Activated T-helper 1 cell treated with anti-CD3 and anti-CD28 coated beads, Interleukin-12 subunit alpha, Interleukin-12 subunit beta, Interleukin-2, Interleukin-4 antibody, amounts not matched to agents 30 ng/mL and 10 ng/mL and 1 ng/mL, durations not matched to agents 14 hours and 24 hours and 36 hours (primary cell): ENCODE measurements at regions of chr7 and their contacts with region 1.

Region 1: GRCh38 chr7:135509903-135510602 is at the start of gene CNOT4:
- DNase-seq: peak; percentile 92
- H3K4me3 Mint-ChIP-seq: no peak within 1 kb of the TSS
- H3K27ac Mint-ChIP-seq: no peak within 1 kb of the TSS
- H3K4me1 Mint-ChIP-seq: no peaks in the 10 kb centered on the region
- H3K27me3 Mint-ChIP-seq: no peaks in the 10 kb centered on the region
- total RNA-seq, gene CNOT4: 21.3 and 23.3 TPM in 2 replicates

Region 2: GRCh38 chr7:134873253-134873652 is 636.8 kb before region 1 on chr7:
- intact Hi-C with region 1: no loop called
- DNase-seq: no peak
- H3K4me3 Mint-ChIP-seq: no peak overlapping the region
- H3K27ac Mint-ChIP-seq: no peak overlapping the region
- H3K4me1 Mint-ChIP-seq: peaks cover 17% of the 10 kb centered on the region
- H3K27me3 Mint-ChIP-seq: peaks cover 6% of the 10 kb centered on the region

Region 3: DNA sequence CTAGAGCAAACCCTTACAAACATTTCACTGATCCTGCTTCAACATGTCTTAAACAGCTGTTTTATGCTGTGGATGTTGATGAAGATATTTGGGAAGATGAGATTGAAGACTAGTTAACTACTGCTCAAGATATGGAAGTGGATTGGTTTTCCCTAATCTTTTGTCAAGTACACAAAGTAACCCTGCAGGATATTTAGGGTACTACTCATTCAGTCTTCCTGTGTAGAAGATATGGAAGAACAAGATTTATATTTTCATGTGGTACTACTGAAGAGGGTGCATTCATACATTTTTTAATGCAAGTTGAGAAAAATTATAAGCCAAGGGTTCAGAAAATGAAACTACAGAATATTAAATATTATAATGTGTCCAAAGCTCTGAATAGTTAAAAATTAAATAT is 380.5 kb before region 1 on chr7:
- intact Hi-C with region 1: no loop called
- DNase-seq: no peak
- H3K4me3 Mint-ChIP-seq: no peak overlapping the region
- H3K27ac Mint-ChIP-seq: no peak overlapping the region
- H3K4me1 Mint-ChIP-seq: no peaks in the 10 kb centered on the region
- H3K27me3 Mint-ChIP-seq: peaks cover 2% of the 10 kb centered on the region

Region 4: DNA sequence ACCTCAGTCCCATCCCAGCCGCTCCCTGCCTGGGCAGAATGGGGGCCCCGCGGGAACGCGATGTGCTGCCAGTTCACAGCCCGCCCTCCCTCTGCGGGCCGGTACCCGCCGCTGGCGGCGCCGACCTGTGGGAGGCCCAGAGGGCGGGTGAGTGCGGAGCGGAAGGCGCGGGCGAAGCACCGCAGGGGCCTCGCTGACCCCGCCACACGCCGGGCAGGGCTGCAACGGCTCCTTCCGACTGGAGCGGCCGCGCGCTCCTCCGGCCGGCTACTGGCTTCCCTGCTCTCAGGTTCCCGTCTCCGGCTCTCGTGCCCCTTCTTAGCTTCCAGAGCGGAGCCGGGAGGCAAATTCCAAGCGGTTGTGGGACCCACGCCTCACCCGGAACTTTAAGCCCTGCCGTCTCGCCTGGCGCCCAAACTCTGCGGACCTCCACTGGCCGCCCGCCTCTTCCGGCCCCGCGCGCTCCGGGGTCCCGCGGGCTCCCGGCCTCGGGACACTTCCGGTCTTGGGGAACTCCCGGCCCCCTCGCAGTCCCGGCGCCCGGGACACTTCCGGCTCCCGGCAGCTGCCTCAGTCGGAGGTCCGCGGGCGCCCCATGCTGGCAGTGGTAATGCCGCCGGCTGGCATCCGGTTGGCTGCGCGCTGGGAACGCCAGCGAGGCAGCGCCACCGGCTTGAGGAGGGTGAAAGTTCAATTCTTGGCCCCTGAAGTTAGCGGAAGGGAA is 339.6 kb before region 1 on chr7 and contains the start of gene CYREN:
- intact Hi-C with region 1: loop called (anchors 1 kb)
- DNase-seq: peak; percentile 84
- H3K4me3 Mint-ChIP-seq: peak within 1 kb of the TSS; percentile 95
- H3K27ac Mint-ChIP-seq: peak within 1 kb of the TSS; percentile 96
- H3K4me1 Mint-ChIP-seq: peaks cover 38% of the 10 kb centered on the region
- H3K27me3 Mint-ChIP-seq: no peaks in the 10 kb centered on the region
- total RNA-seq, gene CYREN: 58.8 and 58.9 TPM in 2 replicates

Region 5: DNA sequence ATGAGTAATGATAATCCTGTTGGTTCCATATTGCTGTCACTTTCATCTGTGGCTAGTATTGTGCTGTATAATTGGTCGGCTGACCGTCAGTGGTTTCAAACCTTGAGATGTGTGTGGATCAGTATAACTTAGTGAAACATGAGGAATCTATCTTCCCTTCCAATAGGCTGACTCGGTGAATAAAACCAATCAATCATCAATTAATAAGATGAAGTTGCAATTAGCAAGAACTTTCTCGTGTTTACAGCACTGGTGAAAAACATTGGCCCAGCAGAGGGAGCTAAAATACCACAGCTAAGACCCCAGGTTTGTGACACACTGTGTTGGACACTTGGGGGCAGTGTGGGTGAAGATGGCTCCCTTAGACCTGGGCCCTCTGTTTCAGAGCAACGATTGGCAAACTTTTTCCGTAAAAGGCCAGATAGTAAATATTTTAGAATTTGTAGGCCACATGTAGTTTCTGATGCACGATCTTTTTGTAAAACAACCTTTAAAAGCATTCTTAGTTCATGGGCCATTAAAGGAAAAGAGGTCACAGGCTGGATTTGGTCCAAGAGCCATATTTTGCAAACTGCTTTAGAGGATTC is 228.6 kb before region 1 on chr7:
- intact Hi-C with region 1: loop called (anchors 1 kb)
- DNase-seq: peak; percentile 65
- H3K4me3 Mint-ChIP-seq: no peak overlapping the region
- H3K27ac Mint-ChIP-seq: no peak overlapping the region
- H3K4me1 Mint-ChIP-seq: peaks cover 16% of the 10 kb centered on the region
- H3K27me3 Mint-ChIP-seq: peaks cover 10% of the 10 kb centered on the region

Region 6: DNA sequence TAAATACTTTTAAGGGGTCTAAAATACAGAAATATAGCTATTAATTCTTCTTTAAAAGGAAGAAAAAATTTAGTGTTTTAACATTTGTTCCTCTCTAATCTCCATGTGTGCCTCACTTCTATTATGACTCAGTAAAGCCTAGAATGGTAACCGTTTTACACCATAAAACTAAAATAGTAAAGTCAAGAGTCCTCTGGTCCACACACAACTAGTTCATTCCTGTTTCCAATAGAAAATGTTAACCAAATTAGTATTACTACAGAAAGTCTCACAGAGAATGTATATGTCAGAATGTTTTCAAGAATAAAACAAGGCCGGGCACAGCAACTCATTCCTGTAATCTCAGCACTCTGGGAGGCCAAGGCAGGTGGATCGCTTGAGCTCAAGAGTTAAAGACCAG is 56.0 kb before region 1 on chr7:
- intact Hi-C with region 1: loop called (anchors 2 kb)
- DNase-seq: no peak
- H3K4me3 Mint-ChIP-seq: no peak overlapping the region
- H3K27ac Mint-ChIP-seq: no peak overlapping the region
- H3K4me1 Mint-ChIP-seq: peaks cover 9% of the 10 kb centered on the region
- H3K27me3 Mint-ChIP-seq: no peaks in the 10 kb centered on the region

Region 7: GRCh38 chr7:135645296-135645904 is 135.3 kb after region 1 on chr7:
- intact Hi-C with region 1: loop called (anchors 1 kb)
- DNase-seq: no peak
- H3K4me3 Mint-ChIP-seq: no peak overlapping the region
- H3K27ac Mint-ChIP-seq: no peak overlapping the region
- H3K4me1 Mint-ChIP-seq: no peaks in the 10 kb centered on the region
- H3K27me3 Mint-ChIP-seq: no peaks in the 10 kb centered on the region

Region 8: GRCh38 chr7:135977007-135977741 is 467.1 kb after region 1 on chr7 and contains the start of gene MTPN:
- intact Hi-C with region 1: loop called (anchors 1 kb)
- DNase-seq: peak; percentile 98
- H3K4me3 Mint-ChIP-seq: peak within 1 kb of the TSS; percentile 98
- H3K27ac Mint-ChIP-seq: peak within 1 kb of the TSS; percentile 88
- H3K4me1 Mint-ChIP-seq: peaks cover 75% of the 10 kb centered on the region
- H3K27me3 Mint-ChIP-seq: peaks cover 2% of the 10 kb centered on the region
- total RNA-seq, gene MTPN: 117 and 119 TPM in 2 replicates